Activated CD4-positive, alpha-beta T cell treated with anti-CD3 and anti-CD28 coated beads, Interleukin-2, amount 10 ng/mL, durations not matched to agents 24 days and 14 days (primary cell): ENCODE measurements at regions of chr20 and their contacts with region 1.

Region 1: GRCh38 chr20:25247956-25248785 is at the start of gene PYGB:
- DNase-seq: peak; percentile 92
- H3K4me3 Mint-ChIP-seq: peak within 1 kb of the TSS; percentile 91
- H3K27ac Mint-ChIP-seq: peak within 1 kb of the TSS; percentile 90
- H3K4me1 Mint-ChIP-seq: peaks cover 32% of the 10 kb centered on the region
- H3K27me3 Mint-ChIP-seq: peaks cover 7% of the 10 kb centered on the region
- total RNA-seq, gene PYGB: 36.0 and 36.6 TPM in 2 replicates

Region 2: DNA sequence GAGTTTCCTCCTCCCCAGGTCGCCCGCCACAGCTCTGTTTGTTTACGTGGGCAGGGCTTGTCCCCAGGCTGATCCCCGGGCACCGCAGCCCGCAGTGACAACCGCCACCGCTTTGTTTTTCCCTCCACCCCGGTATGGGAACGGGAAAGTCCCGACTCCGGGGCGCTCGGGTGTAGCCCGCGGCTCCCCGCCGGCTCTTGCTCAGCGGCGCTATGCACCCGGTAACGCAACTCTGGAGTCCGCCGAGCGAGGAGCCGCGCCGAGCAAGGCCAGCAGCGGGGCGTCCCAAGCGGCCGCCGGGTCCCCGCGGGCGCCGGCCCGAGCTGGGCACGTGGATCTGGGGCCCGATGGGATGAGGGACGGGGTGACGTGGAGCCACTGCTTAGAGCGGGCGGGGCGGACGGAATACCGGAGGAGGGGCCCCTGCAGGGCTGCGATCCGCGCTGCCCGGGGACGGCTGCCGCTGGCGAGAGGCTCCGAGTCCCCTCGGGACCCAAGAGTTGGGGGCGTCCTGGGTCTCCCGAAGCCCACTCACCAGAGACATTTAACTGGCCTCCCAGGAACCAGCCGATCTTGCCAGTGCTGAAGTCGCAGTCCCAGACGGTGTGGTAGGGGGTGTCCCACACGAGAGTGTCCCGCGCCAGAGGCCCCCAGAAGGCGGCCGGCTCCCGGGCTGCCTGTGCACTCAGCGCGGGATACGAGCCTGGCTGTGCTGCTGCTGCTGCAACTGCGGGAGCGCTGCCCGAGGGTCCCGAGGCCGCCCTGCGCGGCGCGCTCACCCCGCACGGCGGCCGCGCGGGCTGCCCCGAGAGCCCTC is 190.7 kb before region 1 on chr20:
- intact Hi-C with region 1: loop called (anchors 2 kb)
- DNase-seq: peak; percentile 95
- H3K4me3 Mint-ChIP-seq: peak overlapping the region; percentile 78
- H3K27ac Mint-ChIP-seq: peak overlapping the region; percentile 65
- H3K4me1 Mint-ChIP-seq: peaks cover 39% of the 10 kb centered on the region
- H3K27me3 Mint-ChIP-seq: peaks cover 37% of the 10 kb centered on the region

Region 3: GRCh38 chr20:25195014-25195961 is 52.9 kb before region 1 on chr20 and contains the start of gene ENTPD6:
- intact Hi-C with region 1: loop called (anchors 1 kb)
- DNase-seq: peak; percentile 98
- H3K4me3 Mint-ChIP-seq: peak within 1 kb of the TSS; percentile 94
- H3K27ac Mint-ChIP-seq: peak within 1 kb of the TSS; percentile 79
- H3K4me1 Mint-ChIP-seq: peaks cover 27% of the 10 kb centered on the region
- H3K27me3 Mint-ChIP-seq: peaks cover 6% of the 10 kb centered on the region
- total RNA-seq, gene ENTPD6: 42.1 and 44.2 TPM in 2 replicates

Region 4: GRCh38 chr20:25237610-25238318 is 10.4 kb before region 1 on chr20:
- intact Hi-C with region 1: loop called (anchors 1 kb)
- DNase-seq: peak; percentile 81
- H3K4me3 Mint-ChIP-seq: peak overlapping the region; percentile 55
- H3K27ac Mint-ChIP-seq: peak overlapping the region; percentile 91
- H3K4me1 Mint-ChIP-seq: peaks cover 22% of the 10 kb centered on the region
- H3K27me3 Mint-ChIP-seq: peaks cover under 1% of the 10 kb centered on the region

Region 5: DNA sequence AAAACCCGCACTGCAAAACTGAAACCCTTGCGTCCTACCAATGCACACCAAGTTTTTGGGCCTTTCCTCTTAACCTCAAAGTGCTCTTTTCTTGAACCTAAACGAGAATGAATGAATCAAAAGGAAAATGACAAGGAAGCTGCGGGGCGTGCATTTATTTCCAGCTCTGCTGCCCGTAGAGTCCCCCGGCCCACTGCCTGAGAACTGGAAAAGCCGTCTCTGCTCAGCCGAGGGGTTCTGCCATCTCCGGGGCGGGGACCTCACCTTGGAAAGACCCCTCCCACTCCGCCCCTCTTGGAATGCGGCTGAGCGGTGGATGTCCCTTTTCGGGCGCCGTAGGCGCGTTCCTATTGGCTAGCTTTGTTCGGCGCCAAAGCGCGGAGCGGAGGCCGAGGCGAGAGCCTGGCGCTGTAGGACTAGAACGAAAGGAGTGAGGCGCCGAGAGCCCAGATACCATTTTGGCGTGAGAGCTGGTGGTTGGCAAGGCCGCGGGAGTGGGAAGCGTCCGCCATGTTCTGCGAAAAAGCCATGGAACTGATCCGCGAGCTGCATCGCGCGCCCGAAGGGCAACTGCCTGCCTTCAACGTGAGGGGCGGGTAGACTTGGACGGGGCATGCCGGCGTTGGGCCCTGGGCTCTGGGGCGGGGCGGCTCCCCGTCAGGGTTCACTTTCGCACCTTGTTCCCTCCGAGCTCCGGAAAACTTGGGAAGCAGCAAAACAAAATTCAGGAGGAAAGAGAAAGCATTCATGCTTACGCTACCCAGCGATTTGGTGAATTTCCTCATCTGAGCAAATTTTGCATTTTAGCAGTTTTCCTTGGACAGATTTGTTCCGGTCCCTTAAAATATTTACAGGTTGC is 159.4 kb after region 1 on chr20 and contains the start of gene GINS1:
- intact Hi-C with region 1: loop called (anchors 5 kb)
- DNase-seq: peak; percentile 96
- H3K4me3 Mint-ChIP-seq: peak within 1 kb of the TSS; percentile 90
- H3K27ac Mint-ChIP-seq: peak within 1 kb of the TSS; percentile 95
- H3K4me1 Mint-ChIP-seq: peaks cover 19% of the 10 kb centered on the region
- H3K27me3 Mint-ChIP-seq: no peaks in the 10 kb centered on the region
- total RNA-seq, gene GINS1: 43.0 and 43.2 TPM in 2 replicates

Region 6: DNA sequence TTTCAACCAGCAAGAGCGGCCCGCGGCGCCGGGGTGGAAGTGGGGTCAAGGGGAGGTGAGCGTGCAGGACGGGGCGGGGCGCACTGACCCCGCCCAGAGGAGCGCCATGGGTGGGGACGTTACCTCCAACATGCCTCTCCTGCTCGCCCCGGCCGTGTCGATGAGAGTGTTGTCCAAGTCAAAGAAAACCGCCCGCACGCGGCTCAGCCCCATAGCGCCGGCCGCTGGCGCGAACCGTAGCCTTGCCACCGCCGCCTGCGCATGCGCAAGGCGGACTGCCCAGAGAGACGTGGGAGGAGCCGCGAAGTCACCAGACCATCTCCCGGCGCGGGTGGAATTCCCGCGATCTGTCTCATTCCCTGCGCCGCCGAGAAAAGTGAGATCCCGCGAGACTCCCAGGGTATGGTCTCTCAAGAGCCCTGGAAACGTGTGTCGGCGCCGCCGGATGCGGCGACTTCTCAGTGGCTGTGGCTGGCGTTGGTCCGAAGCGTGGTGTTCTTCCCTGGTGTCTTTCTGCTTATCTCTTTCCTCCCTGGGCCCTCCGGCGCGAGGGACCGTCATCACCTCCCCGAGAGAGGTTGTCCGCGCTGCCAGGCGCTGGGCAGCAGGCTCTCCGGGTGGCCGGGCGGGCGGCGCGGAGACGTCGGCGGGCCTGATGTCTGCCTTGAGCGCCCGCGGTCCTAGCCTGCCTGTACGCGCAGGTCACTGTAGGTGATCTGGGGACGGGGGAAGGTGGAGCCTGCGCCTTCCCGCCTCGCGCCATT is 375.7 kb after region 1 on chr20 and contains the start of gene NANP:
- intact Hi-C with region 1: loop called (anchors 5 kb)
- DNase-seq: peak; percentile 96
- H3K4me3 Mint-ChIP-seq: peak within 1 kb of the TSS; percentile 85
- H3K27ac Mint-ChIP-seq: peak within 1 kb of the TSS; percentile 98
- H3K4me1 Mint-ChIP-seq: peaks cover 30% of the 10 kb centered on the region
- H3K27me3 Mint-ChIP-seq: no peaks in the 10 kb centered on the region
- total RNA-seq, gene NANP: 10.0 TPM in 2 replicates